Mammary epithelial cell (primary cell): ENCODE measurements at regions of chr10 and their contacts with region 1.

Region 1: DNA sequence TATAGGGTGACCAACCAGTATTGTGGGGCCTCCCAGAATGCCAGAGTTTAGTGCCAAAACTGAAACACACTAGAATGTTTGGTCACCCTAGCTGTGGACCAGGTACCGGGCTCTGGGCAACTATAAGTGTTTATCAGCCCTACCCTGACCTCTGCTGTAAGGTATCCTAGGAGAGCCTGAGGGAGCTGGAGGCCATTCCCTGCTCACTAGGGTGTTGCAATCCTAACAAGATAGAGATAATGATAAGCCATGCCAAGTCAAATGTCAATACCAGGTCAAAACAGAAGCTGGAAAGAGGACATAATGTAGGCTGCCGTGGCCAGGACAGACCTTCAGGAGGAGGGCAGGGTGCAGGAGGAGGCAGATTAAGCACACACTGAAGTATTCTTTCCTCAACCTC is 151.8 kb downstream of the KCNMA1 start:
- DNase-seq: no peak
- H3K4me3 ChIP-seq: no peak overlapping the region
- H3K27ac ChIP-seq: no peak overlapping the region
- H3K4me1 ChIP-seq: peaks cover 10% of the 10 kb centered on the region
- H3K27me3 ChIP-seq: no peaks in the 10 kb centered on the region
- CTCF ChIP-seq: no peak

Region 2: GRCh38 chr10:77405771-77406241 is 80.0 kb before region 1 on chr10:
- CTCF ChIA-PET with region 1: no interaction called
- dilution Hi-C with region 1: loop called (anchors 5 kb)
- in situ Hi-C with region 1: no loop called
- intact Hi-C with region 1: no loop called
- DNase-seq: peak; percentile 66
- H3K4me3 ChIP-seq: no peak overlapping the region
- H3K27ac ChIP-seq: no peak overlapping the region
- H3K4me1 ChIP-seq: peaks cover 39% of the 10 kb centered on the region
- H3K27me3 ChIP-seq: no peaks in the 10 kb centered on the region
- CTCF ChIP-seq: no peak

Region 3: GRCh38 chr10:77436257-77436975 is 49.4 kb before region 1 on chr10:
- CTCF ChIA-PET with region 1: no interaction called
- dilution Hi-C with region 1: loop called (anchors 5 kb)
- in situ Hi-C with region 1: no loop called
- intact Hi-C with region 1: no loop called
- DNase-seq: no peak
- H3K4me3 ChIP-seq: no peak overlapping the region
- H3K27ac ChIP-seq: no peak overlapping the region
- H3K4me1 ChIP-seq: no peaks in the 10 kb centered on the region
- H3K27me3 ChIP-seq: no peaks in the 10 kb centered on the region
- CTCF ChIP-seq: no peak

Region 4: GRCh38 chr10:78579995-78580394 is 1094.1 kb after region 1 on chr10:
- CTCF ChIA-PET with region 1: no interaction called
- dilution Hi-C with region 1: no loop called
- in situ Hi-C with region 1: no loop called
- intact Hi-C with region 1: no loop called
- DNase-seq: no peak
- H3K4me3 ChIP-seq: no peak overlapping the region
- H3K27ac ChIP-seq: no peak overlapping the region
- H3K4me1 ChIP-seq: no peaks in the 10 kb centered on the region
- H3K27me3 ChIP-seq: no peaks in the 10 kb centered on the region
- CTCF ChIP-seq: no peak